ENCODE measurements at regions of chr5 and their contacts with region 1.

Region 1: DNA sequence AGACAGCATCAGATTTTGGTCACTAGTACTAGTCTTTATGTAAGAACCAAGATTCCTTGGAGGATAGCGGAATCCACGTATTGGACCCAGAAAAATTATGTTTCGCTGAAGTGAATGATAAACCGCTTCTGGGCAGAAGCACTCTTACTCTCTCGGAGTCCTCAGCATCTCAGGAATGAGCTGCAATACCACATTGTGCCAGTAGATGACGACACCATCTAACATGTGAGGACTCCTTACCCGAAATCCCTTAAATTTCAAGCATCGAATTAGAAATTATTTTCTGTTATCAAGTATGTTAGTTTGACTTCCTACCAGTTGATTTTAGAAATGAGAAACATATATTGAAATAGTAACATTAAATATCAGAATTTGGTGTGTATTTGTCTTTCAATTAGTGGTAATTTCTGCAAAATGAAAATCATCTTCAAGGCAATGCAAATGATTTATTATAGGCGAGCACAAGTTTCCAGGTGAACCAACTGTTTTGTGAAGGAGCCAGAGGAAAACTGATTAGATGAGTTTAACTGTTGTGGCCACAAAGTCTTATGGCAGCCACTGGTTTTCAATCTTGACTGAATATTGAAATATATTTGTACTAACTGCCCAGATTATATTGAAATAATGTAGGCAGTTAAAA is 66.0 kb upstream of the CAMK4 start:
- DNase-seq: peak; percentile 71
- H3K4me3 ChIP-seq: no peak overlapping the region
- H3K27ac ChIP-seq: no peak overlapping the region
- H3K4me1 ChIP-seq: no peaks in the 10 kb centered on the region
- CTCF ChIP-seq: peak; percentile 100

Region 2: DNA sequence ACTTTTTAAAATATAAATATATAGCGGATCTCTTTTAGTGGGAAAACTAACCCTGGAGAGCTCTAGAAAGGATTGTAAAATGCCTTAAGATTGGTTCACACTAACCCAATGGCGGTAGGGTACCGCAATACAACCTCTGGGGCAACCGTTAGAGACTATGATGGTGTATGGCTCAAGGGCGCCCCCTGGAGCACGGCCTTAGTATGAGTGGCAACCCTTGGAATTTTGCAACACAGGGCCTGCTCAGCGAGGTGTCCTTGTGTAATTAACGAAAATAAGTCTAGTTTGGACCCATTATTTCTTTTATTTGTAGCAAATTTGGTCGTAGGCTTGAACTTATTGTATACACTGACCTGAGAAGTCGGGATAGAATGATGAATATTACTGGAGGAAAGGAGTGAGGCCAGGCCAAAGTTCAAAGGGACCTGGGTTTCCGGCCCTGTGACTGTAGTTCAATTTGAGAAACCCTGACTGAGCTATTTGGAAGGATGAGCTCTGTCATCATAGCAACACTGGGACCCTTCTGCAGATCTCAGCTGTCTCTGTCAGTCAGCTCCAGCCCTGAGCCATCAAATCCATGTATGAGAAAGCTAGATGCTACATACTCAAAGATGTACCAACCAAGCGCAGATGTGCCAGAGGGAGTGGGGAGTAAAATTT is 120.8 kb after region 1 on chr5:
- CTCF ChIA-PET with region 1: interaction called, 4 read pairs
- POLR2A ChIA-PET with region 1: no interaction called
- intact Hi-C with region 1: loop called (anchors 1 kb)
- DNase-seq: peak; percentile 59
- H3K4me3 ChIP-seq: no peak overlapping the region
- H3K27ac ChIP-seq: no peak overlapping the region
- H3K4me1 ChIP-seq: peaks cover 6% of the 10 kb centered on the region
- CTCF ChIP-seq: peak; percentile 93

Region 3: GRCh38 chr5:111478266-111478665 is 320.0 kb after region 1 on chr5:
- CTCF ChIA-PET with region 1: no interaction called
- POLR2A ChIA-PET with region 1: no interaction called
- intact Hi-C with region 1: loop called (anchors 5 kb)
- DNase-seq: no peak
- H3K4me3 ChIP-seq: no peak overlapping the region
- H3K27ac ChIP-seq: no peak overlapping the region
- H3K4me1 ChIP-seq: no peaks in the 10 kb centered on the region
- CTCF ChIP-seq: 0 out of 2 replicates have a peak, but pooled peaks have one; percentile 29

Measured in OCI-LY7 (cell line).